ENCODE measurements at regions of chr19 and their contacts with region 1.

Region 1: DNA sequence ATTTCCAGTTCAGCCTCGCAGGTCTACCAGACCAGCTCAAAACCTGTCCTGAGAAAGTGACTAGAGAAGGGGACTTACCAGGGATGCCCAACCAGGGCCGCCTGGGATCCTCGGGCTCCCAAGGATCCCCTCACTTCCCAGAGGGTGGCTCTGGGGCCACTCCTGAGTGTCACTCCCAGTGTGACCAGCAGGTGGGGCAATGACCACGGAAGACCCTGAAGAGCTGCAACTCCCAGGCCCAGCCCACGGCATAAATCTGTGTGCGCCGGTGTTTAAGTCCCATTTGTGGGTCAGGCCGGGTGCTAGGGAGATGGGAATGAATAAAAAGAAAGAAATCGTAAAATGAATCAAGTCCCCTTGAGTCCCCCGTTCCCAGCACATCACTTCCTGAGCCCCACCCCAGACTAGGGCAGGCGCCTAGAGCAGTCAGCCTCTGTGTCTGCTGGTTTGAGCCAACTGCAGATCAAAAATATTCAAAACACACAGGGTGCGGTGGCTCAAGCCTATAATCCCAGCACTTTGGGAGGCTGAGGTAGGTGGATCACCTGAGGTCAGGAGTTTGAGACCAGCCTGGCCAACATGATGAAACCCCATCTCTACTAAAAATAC is 10.7 kb downstream of the PTGIR start:
- DNase-seq: peak; percentile 93
- H3K4me3 Mint-ChIP-seq: no peak overlapping the region
- H3K27ac Mint-ChIP-seq: peak overlapping the region; percentile 67
- H3K4me1 Mint-ChIP-seq: peaks cover 75% of the 10 kb centered on the region
- H3K27me3 Mint-ChIP-seq: no peaks in the 10 kb centered on the region

Region 2: DNA sequence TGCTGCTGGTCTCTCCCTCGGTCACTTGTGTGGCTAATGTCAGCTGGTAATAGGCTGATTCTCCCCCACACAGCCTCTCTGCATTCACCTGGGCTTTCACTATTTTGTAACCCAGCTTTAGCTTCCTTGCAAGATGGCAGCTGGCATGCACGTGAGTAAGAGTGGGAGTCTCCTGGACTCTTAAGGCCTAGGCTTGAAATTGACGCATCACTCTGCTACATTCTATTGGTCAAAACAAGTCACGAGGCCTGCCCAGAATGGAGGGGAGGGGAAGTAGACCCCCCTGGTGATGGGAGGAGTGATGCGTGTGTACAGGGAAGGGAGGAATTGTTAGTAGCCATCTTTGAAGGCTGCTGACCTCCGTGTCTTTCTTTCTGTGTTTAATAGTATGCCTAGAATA is 93.6 kb before region 1 on chr19:
- CTCF ChIA-PET with region 1: interaction called, 3 read pairs
- intact Hi-C with region 1: loop called (anchors 2 kb)
- DNase-seq: peak; percentile 28
- H3K4me3 Mint-ChIP-seq: no peak overlapping the region
- H3K27ac Mint-ChIP-seq: peak overlapping the region; percentile 5
- H3K4me1 Mint-ChIP-seq: peaks cover 62% of the 10 kb centered on the region
- H3K27me3 Mint-ChIP-seq: no peaks in the 10 kb centered on the region

Region 3: DNA sequence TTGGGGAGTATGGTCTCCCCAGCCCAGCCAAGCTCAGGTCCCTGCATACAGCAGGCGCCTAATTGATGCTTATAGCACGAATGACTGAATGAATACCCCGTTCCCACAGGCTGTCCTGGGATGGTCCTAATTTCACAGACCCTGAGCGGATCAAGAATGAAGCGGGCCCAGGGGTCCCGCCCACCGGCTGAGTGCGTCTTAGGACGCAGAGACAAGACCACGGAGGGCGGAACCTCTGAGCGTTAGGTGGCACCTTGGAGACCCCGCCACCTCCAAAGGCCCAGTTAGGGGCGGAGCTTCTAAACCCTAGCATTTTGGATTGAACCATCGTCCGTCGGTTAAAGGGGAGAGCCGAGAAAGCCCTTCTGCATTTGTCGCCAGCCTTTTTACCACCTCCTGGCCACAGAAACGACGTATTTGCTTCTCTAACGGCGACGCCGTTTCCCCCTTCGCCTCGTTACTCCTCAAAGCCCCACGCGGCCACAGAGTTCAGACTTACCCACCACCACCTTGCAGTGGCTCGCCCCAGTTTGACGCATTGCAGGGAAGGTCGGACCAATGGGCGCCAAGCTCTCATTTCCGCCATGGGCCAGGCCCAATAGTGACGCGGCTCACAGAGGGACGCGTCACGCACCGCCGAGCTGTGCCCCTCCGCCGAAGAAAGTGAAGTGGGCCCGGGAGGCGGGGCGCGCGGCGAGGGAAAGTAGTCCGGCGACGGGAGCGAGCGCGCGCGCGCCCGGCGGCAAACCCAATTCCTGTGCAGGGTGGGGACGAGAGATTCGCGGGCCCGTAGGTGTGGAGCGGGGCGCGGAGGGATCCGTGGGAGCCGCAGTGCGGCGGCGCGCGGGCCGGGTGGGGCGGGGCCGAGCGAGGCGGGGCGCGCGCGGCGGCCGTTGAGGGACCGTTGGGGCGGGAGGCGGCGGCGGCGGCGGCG is 13.6 kb before region 1 on chr19:
- CTCF ChIA-PET with region 1: interaction called, 15 read pairs
- intact Hi-C with region 1: loop called (anchors 1 kb)
- DNase-seq: peak; percentile 97
- H3K4me3 Mint-ChIP-seq: peak overlapping the region; percentile 96
- H3K27ac Mint-ChIP-seq: peak overlapping the region; percentile 100
- H3K4me1 Mint-ChIP-seq: peaks cover 32% of the 10 kb centered on the region
- H3K27me3 Mint-ChIP-seq: no peaks in the 10 kb centered on the region

Region 4: GRCh38 chr19:46634045-46634655 is 19.9 kb after region 1 on chr19:
- CTCF ChIA-PET with region 1: interaction called, 15 read pairs
- intact Hi-C with region 1: loop called (anchors 1 kb)
- DNase-seq: peak; percentile 99
- H3K4me3 Mint-ChIP-seq: peak overlapping the region; percentile 74
- H3K27ac Mint-ChIP-seq: peak overlapping the region; percentile 54
- H3K4me1 Mint-ChIP-seq: peaks cover 21% of the 10 kb centered on the region
- H3K27me3 Mint-ChIP-seq: no peaks in the 10 kb centered on the region

Region 5: DNA sequence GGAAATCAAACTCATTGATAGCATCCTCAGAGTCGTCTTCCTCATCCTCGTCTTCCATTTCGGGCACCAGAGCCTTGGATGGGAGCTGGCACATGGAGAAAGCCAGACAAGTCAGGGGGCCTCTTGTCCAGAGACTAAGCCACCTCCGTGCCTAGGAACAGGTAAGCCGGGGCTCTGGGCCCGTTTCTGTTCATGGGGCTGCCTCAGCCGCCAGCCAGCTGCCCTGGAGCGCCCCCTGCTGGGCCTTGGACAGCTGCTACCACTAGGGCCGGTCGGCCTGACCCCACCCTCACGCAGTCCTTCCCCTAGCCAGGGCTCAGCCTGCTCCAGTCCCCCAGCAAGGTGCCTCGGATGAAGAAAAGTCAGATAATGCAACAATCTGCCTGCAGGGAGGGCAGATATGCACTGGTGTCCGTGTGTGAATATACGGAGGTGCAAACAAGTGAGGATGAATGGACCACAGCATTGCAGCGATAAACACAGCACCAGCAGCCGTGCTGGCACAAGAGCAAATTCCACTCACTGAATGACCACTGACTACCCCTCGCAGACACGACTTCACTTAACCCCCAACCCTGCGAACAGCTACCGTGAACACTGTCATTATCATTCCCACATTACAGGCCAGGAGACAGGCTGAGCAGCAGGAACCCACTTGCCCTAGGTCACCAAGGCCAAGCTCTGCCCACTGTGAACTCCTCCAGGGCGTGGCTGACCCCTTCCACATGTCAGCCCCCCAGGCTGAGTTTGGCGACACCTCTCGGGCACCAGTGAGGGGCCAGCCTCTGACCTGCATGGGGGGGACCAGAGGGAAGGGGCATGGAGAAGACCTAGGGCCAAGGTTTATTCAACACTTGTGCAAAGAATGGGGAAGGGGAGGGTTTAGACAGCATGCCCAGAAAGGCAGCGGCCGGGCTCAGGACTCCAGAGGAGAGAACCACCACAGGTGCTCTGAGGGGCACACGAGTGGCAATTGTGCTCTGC is 114.8 kb after region 1 on chr19:
- CTCF ChIA-PET with region 1: interaction called, 9 read pairs
- intact Hi-C with region 1: loop called (anchors 1 kb)
- DNase-seq: peak; percentile 82
- H3K4me3 Mint-ChIP-seq: no peak overlapping the region
- H3K27ac Mint-ChIP-seq: no peak overlapping the region
- H3K4me1 Mint-ChIP-seq: peaks cover 14% of the 10 kb centered on the region
- H3K27me3 Mint-ChIP-seq: no peaks in the 10 kb centered on the region